ENCODE measurements at regions of chr12 and their contacts with region 1.

Region 1: GRCh38 chr12:66717036-66717673 is 38.3 kb upstream of the GRIP1 start:
- DNase-seq: no peak
- H3K4me3 Mint-ChIP-seq: no peak overlapping the region
- H3K27ac Mint-ChIP-seq: no peak overlapping the region
- H3K4me1 Mint-ChIP-seq: peaks cover 11% of the 10 kb centered on the region
- H3K27me3 Mint-ChIP-seq: no peaks in the 10 kb centered on the region

Region 2: GRCh38 chr12:66612090-66612775 is 104.9 kb before region 1 on chr12:
- CTCF ChIA-PET with region 1: no interaction called
- POLR2A ChIA-PET with region 1: no interaction called
- intact Hi-C with region 1: no loop called
- DNase-seq: no peak
- H3K4me3 Mint-ChIP-seq: no peak overlapping the region
- H3K27ac Mint-ChIP-seq: no peak overlapping the region
- H3K4me1 Mint-ChIP-seq: no peaks in the 10 kb centered on the region
- H3K27me3 Mint-ChIP-seq: no peaks in the 10 kb centered on the region

Region 3: DNA sequence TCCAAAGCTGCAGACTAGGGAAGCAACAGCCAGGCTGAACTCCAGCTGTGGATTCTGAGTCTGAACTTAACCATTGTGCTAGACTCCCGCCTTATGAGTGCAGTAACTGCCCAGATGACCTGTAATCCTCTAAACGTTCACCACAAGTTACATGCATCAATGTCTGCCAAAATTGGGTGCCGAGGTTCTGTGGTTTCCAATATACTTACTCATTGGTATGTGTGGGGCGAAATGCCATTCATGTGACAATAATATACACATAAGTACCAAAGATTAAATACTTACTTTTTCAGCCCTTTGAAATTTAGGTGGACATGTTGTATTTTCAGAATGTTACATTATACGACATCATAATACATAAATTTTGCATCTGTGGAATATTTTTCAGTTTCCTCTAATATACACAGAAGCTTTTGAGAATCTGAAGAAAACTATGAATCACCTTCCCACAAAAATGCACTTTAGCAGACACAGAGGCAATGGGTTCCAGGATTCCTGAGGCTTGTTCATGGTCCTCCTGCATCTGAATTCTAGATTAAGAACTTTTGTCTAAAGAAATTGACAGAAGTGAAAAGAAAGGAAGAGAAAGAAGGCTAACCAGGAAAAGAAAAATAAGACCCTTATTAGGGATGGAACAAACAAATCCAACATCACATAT is 70.0 kb before region 1 on chr12:
- CTCF ChIA-PET with region 1: no interaction called
- POLR2A ChIA-PET with region 1: no interaction called
- intact Hi-C with region 1: no loop called
- DNase-seq: no peak
- H3K4me3 Mint-ChIP-seq: no peak overlapping the region
- H3K27ac Mint-ChIP-seq: no peak overlapping the region
- H3K4me1 Mint-ChIP-seq: no peaks in the 10 kb centered on the region
- H3K27me3 Mint-ChIP-seq: no peaks in the 10 kb centered on the region

Region 4: DNA sequence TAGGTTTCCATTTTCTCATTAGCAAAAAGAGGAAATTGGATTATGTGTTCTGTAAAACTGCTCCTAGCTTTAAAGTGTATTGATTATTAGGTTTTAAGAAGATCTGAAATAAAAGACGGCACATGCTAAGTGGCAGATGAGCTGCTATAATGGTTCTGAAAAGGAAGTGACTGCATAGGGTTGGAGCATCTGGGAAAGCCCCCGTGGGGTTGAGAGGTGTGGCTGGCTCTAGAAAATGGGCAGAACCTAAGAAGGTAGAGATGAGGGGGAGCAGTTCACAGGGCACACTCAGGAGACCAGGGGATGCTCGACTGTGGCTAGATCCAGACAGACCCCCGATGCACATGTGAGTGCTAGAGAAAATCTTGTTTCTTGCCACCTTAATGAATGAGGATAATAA is 1274.0 kb after region 1 on chr12:
- CTCF ChIA-PET with region 1: no interaction called
- POLR2A ChIA-PET with region 1: no interaction called
- intact Hi-C with region 1: loop called (anchors 5 kb)
- DNase-seq: peak; percentile 71
- H3K4me3 Mint-ChIP-seq: peak overlapping the region; percentile 65
- H3K27ac Mint-ChIP-seq: peak overlapping the region; percentile 55
- H3K4me1 Mint-ChIP-seq: peaks cover 40% of the 10 kb centered on the region
- H3K27me3 Mint-ChIP-seq: no peaks in the 10 kb centered on the region